Right cardiac atrium (tissue), 5 donors: ENCODE measurements at regions of chr16 and their contacts with region 1.

Region 1: DNA sequence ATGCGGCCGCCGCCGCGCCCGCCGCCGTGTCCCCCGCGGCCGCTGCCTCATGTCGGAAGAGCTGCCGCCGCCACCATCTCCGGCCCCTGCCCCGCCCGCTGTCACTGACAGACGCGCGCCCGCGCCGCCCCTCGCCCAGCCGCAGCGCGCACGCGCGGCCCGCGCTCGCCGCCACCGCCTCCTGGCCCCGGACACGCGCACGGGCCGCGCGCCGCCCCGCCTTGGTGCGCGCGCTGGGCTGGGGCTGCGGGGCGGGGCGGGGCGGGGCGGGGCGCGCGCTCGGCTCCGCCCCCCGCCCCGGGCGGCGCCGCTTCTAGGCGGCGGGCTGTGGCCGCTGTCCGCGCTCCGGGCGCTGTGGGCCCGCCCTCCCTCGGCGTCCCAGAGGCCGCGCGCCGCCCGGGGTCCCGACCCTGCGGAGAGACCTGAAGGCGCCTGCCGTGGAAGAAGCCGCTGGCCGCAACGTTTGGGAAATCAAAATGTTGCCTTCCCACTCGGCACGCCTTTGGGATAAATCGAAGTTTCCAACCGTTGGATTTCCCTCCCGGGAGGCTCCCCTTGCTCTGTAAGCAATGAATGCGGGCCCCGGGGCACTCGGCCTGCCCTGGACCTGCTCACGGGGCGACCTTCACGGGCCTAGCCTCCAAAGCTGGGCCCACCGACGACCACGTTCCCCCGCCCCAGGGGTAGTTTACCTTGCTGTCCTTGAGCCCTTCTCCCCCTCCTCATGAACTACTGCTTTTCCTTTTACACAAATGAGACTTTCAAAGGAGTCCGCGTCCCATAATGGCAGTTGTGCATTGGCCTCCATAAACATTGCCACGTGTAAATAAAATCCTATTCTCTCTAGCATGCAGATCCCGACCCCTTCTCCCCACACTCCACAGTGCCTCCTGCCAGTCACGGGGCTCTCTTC is at the start of gene ADCY9:
- DNase-seq: peak; percentile 81 to 95 (median 93)
- ATAC-seq: peak; percentile 86 to 90
- H3K4me3 ChIP-seq: peak within 1 kb of the TSS; percentile 98
- H3K27ac ChIP-seq: peak within 1 kb of the TSS; percentile 37
- H3K4me1 ChIP-seq: peaks cover 12% of the 10 kb centered on the region
- H3K27me3 ChIP-seq: no peaks in the 10 kb centered on the region
- total RNA-seq, gene ADCY9: 25.9 to 31.4 (median 28.9) TPM

Region 2: GRCh38 chr16:4183237-4184036 is 66.8 kb after region 1 on chr16:
- intact Hi-C with region 1: loop called in 2 of 4 experiments (anchors 5 to 10 kb)
- DNase-seq: peak; percentile 94 to 99 (median 97)
- ATAC-seq: peak; percentile 97 to 98
- H3K4me3 ChIP-seq: peak overlapping the region; percentile 43
- H3K27ac ChIP-seq: peak overlapping the region; percentile 65
- H3K4me1 ChIP-seq: no peaks in the 10 kb centered on the region
- H3K27me3 ChIP-seq: no peaks in the 10 kb centered on the region

Region 3: GRCh38 chr16:4244254-4245076 is 127.9 kb after region 1 on chr16:
- intact Hi-C with region 1: loop called in 1 of 4 experiments (anchors 10 kb)
- DNase-seq: peak in 2 of 3 donors; percentile 32
- ATAC-seq: peak in 1 of 2 donors; percentile 11
- H3K4me3 ChIP-seq: no peak overlapping the region
- H3K27ac ChIP-seq: no peak overlapping the region
- H3K4me1 ChIP-seq: peaks cover 3% of the 10 kb centered on the region
- H3K27me3 ChIP-seq: no peaks in the 10 kb centered on the region

Region 4: GRCh38 chr16:4253394-4254150 is 137.0 kb after region 1 on chr16:
- intact Hi-C with region 1: loop called in 2 of 4 experiments (anchors 5 to 10 kb)
- DNase-seq: peak; percentile 100
- ATAC-seq: peak; percentile 98
- H3K4me3 ChIP-seq: peak overlapping the region; percentile 58
- H3K27ac ChIP-seq: peak overlapping the region; percentile 89
- H3K4me1 ChIP-seq: no peaks in the 10 kb centered on the region
- H3K27me3 ChIP-seq: no peaks in the 10 kb centered on the region